Dorsolateral prefrontal cortex (tissue), 120 donors: ENCODE measurements at regions of chr16 and their contacts with region 1.

Region 1: GRCh38 chr16:56608043-56608875 is at the start of gene MT2A:
- DNase-seq: peak; percentile 84 to 94 (median 91)
- H3K4me3 ChIP-seq: peak within 1 kb of the TSS; percentile 53 to 95 (median 79)
- H3K27ac ChIP-seq: peak within 1 kb of the TSS; percentile 78 to 99 (median 94)
- H3K27me3 ChIP-seq: no peaks in the 10 kb centered on the region
- CTCF ChIP-seq: peak in 31 of 56 donors; percentile 3 to 43 (median 23)
- total RNA-seq, gene MT2A: 138 to 1,007 (median 334) TPM

Region 2: GRCh38 chr16:56332464-56333079 is 275.7 kb before region 1 on chr16:
- intact Hi-C with region 1: loop called in 1 of 2 experiments (anchors 10 kb)
- DNase-seq: peak in 9 of 10 donors; percentile 65 to 81 (median 76)
- H3K4me3 ChIP-seq: no peak overlapping the region
- H3K27ac ChIP-seq: peak overlapping the region in 56 of 59 donors; percentile 45 to 100 (median 76)
- H3K27me3 ChIP-seq: no peaks in the 10 kb centered on the region
- CTCF ChIP-seq: peak in 53 of 56 donors; percentile 13 to 72 (median 50)

Region 3: DNA sequence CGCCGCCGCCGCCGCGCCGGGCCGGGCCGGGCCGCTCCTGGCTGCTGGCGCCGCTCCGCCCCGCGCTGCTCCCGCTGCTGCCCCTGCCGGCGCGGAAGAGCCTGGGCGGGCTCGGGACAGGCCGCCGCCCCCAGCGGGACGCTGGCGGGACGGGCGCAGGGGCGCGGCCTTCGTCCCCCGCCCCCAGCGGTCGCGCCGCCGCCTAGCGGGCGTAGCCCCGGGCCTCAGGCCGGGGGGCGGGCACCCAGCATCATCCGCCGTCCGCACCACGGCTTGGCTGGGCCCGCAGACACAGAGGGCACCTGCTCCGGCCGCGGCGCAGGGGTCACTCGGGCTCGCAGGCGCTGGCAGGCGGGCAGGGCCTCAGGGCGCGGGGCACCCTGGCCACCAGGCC is 182.8 kb before region 1 on chr16 and contains the start of gene AMFR:
- intact Hi-C with region 1: loop called in 1 of 2 experiments (anchors 10 kb)
- DNase-seq: peak in 7 of 10 donors; percentile 28 to 82 (median 49)
- H3K4me3 ChIP-seq: peak within 1 kb of the TSS; percentile 58 to 99 (median 81)
- H3K27ac ChIP-seq: peak within 1 kb of the TSS; percentile 23 to 97 (median 87)
- H3K27me3 ChIP-seq: no peaks in the 10 kb centered on the region
- CTCF ChIP-seq: peak in 55 of 56 donors; percentile 6 to 74 (median 44)
- total RNA-seq, gene AMFR: 103 to 208 (median 129) TPM

Region 4: GRCh38 chr16:56625140-56625942 is 17.1 kb after region 1 on chr16 and contains the start of gene MT1E:
- intact Hi-C with region 1: loop called in 1 of 2 experiments (anchors 2 kb)
- DNase-seq: peak in 6 of 10 donors; percentile 49 to 79 (median 64)
- H3K4me3 ChIP-seq: peak within 1 kb of the TSS; percentile 47 to 82 (median 69)
- H3K27ac ChIP-seq: peak within 1 kb of the TSS in 58 of 59 donors; percentile 47 to 94 (median 84)
- H3K27me3 ChIP-seq: peaks cover 0 to 3% (median 0%) of the 10 kb centered on the region in 45 donors
- CTCF ChIP-seq: peak in 5 of 56 donors; percentile 6 to 37 (median 8)
- total RNA-seq, gene MT1E: 100 to 796 (median 251) TPM

Region 5: DNA sequence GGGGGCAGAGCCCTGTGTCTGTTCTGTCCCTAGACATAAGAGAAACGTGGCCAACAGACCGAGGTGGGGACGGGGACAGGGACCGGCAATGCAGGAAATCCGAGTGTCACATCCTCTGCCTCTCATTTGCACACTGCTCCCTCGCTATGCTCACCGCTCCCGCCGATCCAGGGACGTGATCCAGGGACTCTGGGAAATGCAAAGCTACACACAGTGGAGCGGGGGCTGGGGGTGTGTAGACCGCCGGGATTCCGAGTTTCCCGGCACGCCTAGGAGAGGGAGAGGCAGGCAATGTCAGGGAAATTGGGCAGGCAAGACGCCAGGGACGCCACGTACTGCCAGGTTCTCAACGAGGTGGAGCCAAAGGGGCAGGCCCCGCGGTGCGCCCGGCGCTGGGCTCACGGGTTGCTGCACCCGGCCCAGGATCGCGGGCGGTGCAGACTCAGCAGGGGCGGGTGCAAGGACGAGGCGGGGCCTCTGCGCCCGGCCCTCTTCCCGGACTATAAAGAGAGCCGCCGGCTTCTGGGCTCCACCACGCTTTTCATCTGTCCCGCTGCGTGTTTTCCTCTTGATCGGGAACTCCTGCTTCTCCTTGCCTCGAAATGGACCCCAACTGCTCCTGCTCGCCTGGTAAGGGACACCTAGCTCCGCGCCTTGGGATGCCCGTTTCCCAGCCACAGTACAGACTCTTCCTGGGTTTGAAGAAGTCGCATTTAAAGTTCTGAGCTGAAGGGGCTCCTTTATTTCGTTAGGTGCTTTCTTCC is 73.9 kb after region 1 on chr16 and contains the start of gene MT1X:
- intact Hi-C with region 1: loop called (anchors 5 kb)
- DNase-seq: peak; percentile 72 to 97 (median 90)
- H3K4me3 ChIP-seq: peak within 1 kb of the TSS; percentile 39 to 78 (median 66)
- H3K27ac ChIP-seq: peak within 1 kb of the TSS in 58 of 59 donors; percentile 23 to 93 (median 81)
- H3K27me3 ChIP-seq: no peaks in the 10 kb centered on the region
- CTCF ChIP-seq: peak in 17 of 56 donors; percentile 8 to 44 (median 17)
- total RNA-seq, gene MT1X: 69.5 to 909 (median 191) TPM

Region 6: DNA sequence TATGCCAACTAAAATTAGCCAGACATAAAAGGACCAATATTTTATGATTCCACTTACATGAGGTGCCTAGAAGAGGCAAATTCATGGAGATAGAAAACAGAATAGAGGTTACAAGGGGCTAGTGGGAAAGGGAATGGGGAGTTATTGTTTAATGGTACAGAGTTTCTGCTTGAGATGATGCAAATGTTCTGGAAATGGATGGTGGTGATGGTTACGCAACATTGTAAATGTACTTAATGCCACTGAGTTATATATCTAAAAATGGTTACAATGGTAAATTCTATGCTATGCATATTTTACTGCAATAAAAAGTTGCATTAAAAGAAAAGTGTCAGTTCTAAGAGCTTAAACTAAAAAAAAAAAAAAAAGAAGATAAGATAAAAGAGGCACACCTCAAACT is 91.9 kb after region 1 on chr16:
- intact Hi-C with region 1: loop called (anchors 1 to 5 kb)
- DNase-seq: no peak
- H3K4me3 ChIP-seq: no peak overlapping the region
- H3K27ac ChIP-seq: no peak overlapping the region
- H3K27me3 ChIP-seq: no peaks in the 10 kb centered on the region
- CTCF ChIP-seq: no peak

Region 7: GRCh38 chr16:56742030-56742984 is 134.0 kb after region 1 on chr16:
- intact Hi-C with region 1: no loop called
- DNase-seq: no peak
- H3K4me3 ChIP-seq: no peak overlapping the region
- H3K27ac ChIP-seq: peak overlapping the region in 3 of 59 donors; percentile 1 to 20 (median 2)
- H3K27me3 ChIP-seq: no peaks in the 10 kb centered on the region
- CTCF ChIP-seq: no peak